CD4-positive, alpha-beta memory T cell (primary cell): ENCODE measurements at regions of chr5 and their contacts with region 1.

Region 1: DNA sequence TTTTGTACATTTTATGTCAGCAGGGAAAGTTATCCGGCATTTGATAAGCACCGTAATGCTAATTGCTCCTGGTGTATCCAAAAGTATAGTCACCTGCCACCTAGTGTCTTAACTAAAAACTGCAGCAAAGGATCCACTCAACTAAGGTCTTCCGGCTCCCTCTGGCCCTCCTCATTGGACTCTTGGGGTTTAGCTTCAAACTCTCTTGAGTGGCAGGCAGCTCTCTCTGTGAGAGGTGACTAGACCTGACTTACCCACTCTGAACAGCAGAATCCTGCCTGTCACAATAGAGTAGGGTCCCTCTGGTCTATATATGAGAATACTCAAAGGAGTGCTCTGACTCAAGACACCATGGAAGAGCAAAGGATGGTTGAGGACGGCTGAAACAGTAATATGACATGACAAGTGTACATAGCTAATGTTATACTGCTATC is 60.3 kb upstream of the CAST start:
- DNase-seq: peak; percentile 62 to 72 (median 64)
- H3K4me3 ChIP-seq: no peak overlapping the region
- H3K4me3 Mint-ChIP-seq: no peak overlapping the region
- H3K27ac ChIP-seq: no peak overlapping the region
- H3K27ac Mint-ChIP-seq: peak overlapping the region in 1 of 7 donors; percentile 53
- H3K4me1 ChIP-seq: no peaks in the 10 kb centered on the region
- H3K4me1 Mint-ChIP-seq: peaks cover 0 to 4% (median 0%) of the 10 kb centered on the region in 4 donors
- H3K27me3 ChIP-seq: no peaks in the 10 kb centered on the region
- H3K27me3 Mint-ChIP-seq: peaks cover 3 to 8% of the 10 kb centered on the region in 2 donors

Region 2: GRCh38 chr5:95858661-95859326 is 743.0 kb before region 1 on chr5:
- CTCF ChIA-PET with region 1: interaction called, 46 read pairs
- POLR2A ChIA-PET with region 1: no interaction called
- intact Hi-C with region 1: loop called (anchors 1 kb)
- DNase-seq: peak; percentile 83 to 94 (median 84)
- H3K4me3 ChIP-seq: peak overlapping the region in 1 of 2 donors; percentile 7
- H3K4me3 Mint-ChIP-seq: peak overlapping the region; percentile 32 to 75 (median 54)
- H3K27ac ChIP-seq: no peak overlapping the region
- H3K27ac Mint-ChIP-seq: peak overlapping the region in 6 of 7 donors; percentile 21 to 86 (median 65)
- H3K4me1 ChIP-seq: peaks cover 13% of the 10 kb centered on the region
- H3K4me1 Mint-ChIP-seq: peaks cover 13 to 34% (median 25%) of the 10 kb centered on the region in 4 donors
- H3K27me3 ChIP-seq: no peaks in the 10 kb centered on the region
- H3K27me3 Mint-ChIP-seq: peaks cover 0 to 4% of the 10 kb centered on the region in 2 donors

Region 3: DNA sequence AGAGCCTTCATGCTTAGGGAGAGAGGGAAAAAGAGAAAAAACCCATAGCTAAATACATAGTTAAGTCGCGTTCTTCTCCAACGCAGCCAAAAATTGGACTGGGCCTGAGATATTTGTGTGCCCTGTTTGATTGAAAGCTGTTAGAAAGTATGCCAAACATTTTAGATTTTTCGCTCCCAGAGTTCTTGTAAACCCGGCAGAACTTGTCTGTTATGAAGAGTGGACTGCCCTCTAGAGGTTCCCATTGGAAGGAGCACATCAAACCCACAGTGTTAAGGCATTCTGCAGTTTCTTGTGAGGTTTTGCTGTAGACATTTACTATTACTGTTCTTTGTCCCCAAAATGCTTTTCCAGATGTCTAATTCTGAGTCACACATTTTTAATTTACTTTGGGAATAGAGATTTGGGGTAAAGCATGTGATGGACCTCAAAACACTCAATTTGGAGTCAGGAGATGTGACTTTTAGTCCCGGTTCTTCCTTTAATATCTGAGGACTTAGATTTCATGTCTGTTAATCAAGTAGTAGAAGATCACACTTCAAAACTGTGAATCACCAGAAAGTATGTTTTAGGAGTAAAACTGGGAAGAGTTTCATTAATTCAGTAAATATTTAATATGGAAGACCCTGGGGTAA is 265.4 kb before region 1 on chr5:
- CTCF ChIA-PET with region 1: interaction called, 490 read pairs
- POLR2A ChIA-PET with region 1: no interaction called
- intact Hi-C with region 1: no loop called
- DNase-seq: peak; percentile 61 to 70 (median 66)
- H3K4me3 ChIP-seq: no peak overlapping the region
- H3K4me3 Mint-ChIP-seq: no peak overlapping the region
- H3K27ac ChIP-seq: no peak overlapping the region
- H3K27ac Mint-ChIP-seq: no peak overlapping the region
- H3K4me1 ChIP-seq: no peaks in the 10 kb centered on the region
- H3K4me1 Mint-ChIP-seq: no peaks in the 10 kb centered on the region
- H3K27me3 ChIP-seq: peaks cover 7% of the 10 kb centered on the region
- H3K27me3 Mint-ChIP-seq: peaks cover 9% of the 10 kb centered on the region in 2 donors

Region 4: DNA sequence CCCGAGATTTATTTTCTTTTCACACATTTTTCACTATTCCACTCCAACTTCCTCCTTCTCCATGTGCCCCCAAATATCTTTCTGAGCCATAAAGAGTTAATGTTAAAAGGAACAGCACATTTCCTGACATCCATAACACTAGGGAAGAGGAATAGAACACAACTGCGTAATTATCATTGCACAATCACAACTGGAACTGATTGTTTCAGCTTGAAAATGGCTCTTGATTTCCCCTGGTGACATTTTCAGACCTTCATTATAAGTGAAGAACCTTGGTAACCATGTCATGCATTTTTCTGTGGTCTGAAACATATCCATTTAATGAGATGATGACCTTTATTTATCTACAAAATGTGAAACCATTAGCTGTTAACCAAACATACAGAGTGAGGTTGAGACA is 251.2 kb before region 1 on chr5:
- CTCF ChIA-PET with region 1: interaction called, 490 read pairs
- POLR2A ChIA-PET with region 1: no interaction called
- intact Hi-C with region 1: loop called (anchors 1 kb)
- DNase-seq: no peak
- H3K4me3 ChIP-seq: no peak overlapping the region
- H3K4me3 Mint-ChIP-seq: no peak overlapping the region
- H3K27ac ChIP-seq: no peak overlapping the region
- H3K27ac Mint-ChIP-seq: no peak overlapping the region
- H3K4me1 ChIP-seq: peaks cover 5% of the 10 kb centered on the region
- H3K4me1 Mint-ChIP-seq: peaks cover 3 to 6% (median 4%) of the 10 kb centered on the region in 4 donors
- H3K27me3 ChIP-seq: no peaks in the 10 kb centered on the region
- H3K27me3 Mint-ChIP-seq: peaks cover 4% of the 10 kb centered on the region in 2 donors

Region 5: GRCh38 chr5:96509721-96510333 is 92.0 kb before region 1 on chr5:
- CTCF ChIA-PET with region 1: interaction called, 11 read pairs
- POLR2A ChIA-PET with region 1: no interaction called
- intact Hi-C with region 1: no loop called
- DNase-seq: no peak
- H3K4me3 ChIP-seq: no peak overlapping the region
- H3K4me3 Mint-ChIP-seq: no peak overlapping the region
- H3K27ac ChIP-seq: no peak overlapping the region
- H3K27ac Mint-ChIP-seq: no peak overlapping the region
- H3K4me1 ChIP-seq: no peaks in the 10 kb centered on the region
- H3K4me1 Mint-ChIP-seq: no peaks in the 10 kb centered on the region
- H3K27me3 ChIP-seq: no peaks in the 10 kb centered on the region
- H3K27me3 Mint-ChIP-seq: peaks cover 0 to 3% of the 10 kb centered on the region in 2 donors

Region 6: GRCh38 chr5:96721351-96721977 is 119.6 kb after region 1 on chr5:
- CTCF ChIA-PET with region 1: no interaction called
- POLR2A ChIA-PET with region 1: no interaction called
- intact Hi-C with region 1: no loop called
- DNase-seq: no peak
- H3K4me3 ChIP-seq: no peak overlapping the region
- H3K4me3 Mint-ChIP-seq: no peak overlapping the region
- H3K27ac ChIP-seq: no peak overlapping the region
- H3K27ac Mint-ChIP-seq: peak overlapping the region; percentile 1 to 85 (median 63)
- H3K4me1 ChIP-seq: peaks cover 19% of the 10 kb centered on the region
- H3K4me1 Mint-ChIP-seq: peaks cover 44 to 63% (median 49%) of the 10 kb centered on the region in 4 donors
- H3K27me3 ChIP-seq: no peaks in the 10 kb centered on the region
- H3K27me3 Mint-ChIP-seq: no peaks in the 10 kb centered on the region

Region 7: GRCh38 chr5:97111616-97112015 is 509.8 kb after region 1 on chr5:
- CTCF ChIA-PET with region 1: no interaction called
- POLR2A ChIA-PET with region 1: no interaction called
- intact Hi-C with region 1: no loop called
- DNase-seq: no peak
- H3K4me3 ChIP-seq: no peak overlapping the region
- H3K4me3 Mint-ChIP-seq: no peak overlapping the region
- H3K27ac ChIP-seq: no peak overlapping the region
- H3K27ac Mint-ChIP-seq: no peak overlapping the region
- H3K4me1 ChIP-seq: no peaks in the 10 kb centered on the region
- H3K4me1 Mint-ChIP-seq: peaks cover 0 to 4% (median 2%) of the 10 kb centered on the region in 4 donors
- H3K27me3 ChIP-seq: no peaks in the 10 kb centered on the region
- H3K27me3 Mint-ChIP-seq: peaks cover 2 to 3% of the 10 kb centered on the region in 2 donors